MCF 10A (cell line): ENCODE measurements at regions of chr14 and their contacts with region 1.

Region 1: DNA sequence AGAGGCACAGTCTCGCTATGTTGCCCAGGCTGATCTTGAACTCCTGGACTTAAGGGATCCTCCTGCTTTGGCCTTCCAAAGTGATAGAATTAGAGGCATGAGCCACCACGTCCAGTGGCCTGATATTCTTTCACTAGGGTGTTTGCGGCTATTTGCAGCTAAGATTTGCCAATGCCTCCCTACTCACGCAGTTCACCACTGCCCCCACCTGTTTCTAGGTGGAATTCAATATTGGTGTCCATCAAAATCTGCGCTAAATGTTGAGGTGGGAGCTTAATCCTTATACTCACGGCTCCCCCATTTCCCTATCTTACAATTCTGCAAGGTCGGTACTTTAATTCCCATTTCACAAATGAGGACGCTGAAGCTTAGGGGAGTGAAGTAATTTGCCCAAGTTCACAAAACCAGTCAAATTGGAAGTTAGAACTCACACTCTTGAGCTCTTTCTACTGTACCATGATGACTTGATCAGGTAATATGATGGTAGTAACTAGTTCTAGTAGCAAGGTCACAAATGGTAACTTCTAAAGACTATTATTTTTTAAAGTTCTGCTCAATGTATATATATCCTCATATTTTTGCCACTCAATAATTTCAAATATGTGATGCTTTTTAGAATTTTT is 22.1 kb upstream of the LRRC9 start:
- DNase-seq: peak; percentile 73
- H3K4me3 Mint-ChIP-seq: no peak overlapping the region
- H3K27ac Mint-ChIP-seq: peak overlapping the region; percentile 54
- H3K4me1 Mint-ChIP-seq: peaks cover 14% of the 10 kb centered on the region
- H3K27me3 Mint-ChIP-seq: no peaks in the 10 kb centered on the region
- CTCF ChIP-seq: peak; percentile 84

Region 2: GRCh38 chr14:59507063-59507780 is 390.6 kb before region 1 on chr14:
- CTCF ChIA-PET with region 1: interaction called, 45 read pairs
- POLR2A ChIA-PET with region 1: no interaction called
- intact Hi-C with region 1: loop called (anchors 1 kb)
- DNase-seq: peak; percentile 72
- H3K4me3 Mint-ChIP-seq: no peak overlapping the region
- H3K27ac Mint-ChIP-seq: no peak overlapping the region
- H3K4me1 Mint-ChIP-seq: no peaks in the 10 kb centered on the region
- H3K27me3 Mint-ChIP-seq: no peaks in the 10 kb centered on the region
- CTCF ChIP-seq: peak; percentile 81

Region 3: DNA sequence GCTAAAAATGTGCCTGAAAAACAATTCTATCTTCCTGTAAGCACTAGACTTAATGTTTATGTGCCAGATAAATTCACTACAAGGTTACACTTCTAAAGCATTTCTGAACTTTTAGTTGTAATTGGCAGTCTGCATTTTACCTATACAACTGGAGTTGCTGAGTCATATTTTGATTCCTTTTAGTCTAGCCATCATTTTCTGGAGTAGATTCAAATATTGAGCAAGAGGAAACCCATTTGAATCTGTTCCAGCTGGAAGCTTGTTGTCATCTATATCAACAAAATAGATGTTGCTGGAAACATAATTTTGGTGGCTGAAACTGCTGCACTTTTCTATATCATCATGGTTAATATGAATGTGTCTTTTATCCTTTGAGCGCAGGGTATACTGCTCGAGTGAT is 199.1 kb before region 1 on chr14:
- CTCF ChIA-PET with region 1: interaction called, 152 read pairs
- POLR2A ChIA-PET with region 1: interaction called, 4 read pairs
- intact Hi-C with region 1: no loop called
- DNase-seq: peak; percentile 92
- H3K4me3 Mint-ChIP-seq: peak overlapping the region; percentile 53
- H3K27ac Mint-ChIP-seq: peak overlapping the region; percentile 98
- H3K4me1 Mint-ChIP-seq: peaks cover 48% of the 10 kb centered on the region
- H3K27me3 Mint-ChIP-seq: no peaks in the 10 kb centered on the region
- CTCF ChIP-seq: no peak

Region 4: GRCh38 chr14:59882957-59883356 is 14.9 kb before region 1 on chr14:
- CTCF ChIA-PET with region 1: interaction called, 10 read pairs
- POLR2A ChIA-PET with region 1: interaction called, 3 read pairs
- intact Hi-C with region 1: no loop called
- DNase-seq: peak; percentile 19
- H3K4me3 Mint-ChIP-seq: no peak overlapping the region
- H3K27ac Mint-ChIP-seq: no peak overlapping the region
- H3K4me1 Mint-ChIP-seq: no peaks in the 10 kb centered on the region
- H3K27me3 Mint-ChIP-seq: no peaks in the 10 kb centered on the region
- CTCF ChIP-seq: no peak

Region 5: GRCh38 chr14:59918824-59919569 is 21.1 kb after region 1 on chr14:
- CTCF ChIA-PET with region 1: interaction called, 22 read pairs
- POLR2A ChIA-PET with region 1: no interaction called
- intact Hi-C with region 1: no loop called
- DNase-seq: peak; percentile 34
- H3K4me3 Mint-ChIP-seq: no peak overlapping the region
- H3K27ac Mint-ChIP-seq: no peak overlapping the region
- H3K4me1 Mint-ChIP-seq: no peaks in the 10 kb centered on the region
- H3K27me3 Mint-ChIP-seq: no peaks in the 10 kb centered on the region
- CTCF ChIP-seq: peak; percentile 34

Region 6: DNA sequence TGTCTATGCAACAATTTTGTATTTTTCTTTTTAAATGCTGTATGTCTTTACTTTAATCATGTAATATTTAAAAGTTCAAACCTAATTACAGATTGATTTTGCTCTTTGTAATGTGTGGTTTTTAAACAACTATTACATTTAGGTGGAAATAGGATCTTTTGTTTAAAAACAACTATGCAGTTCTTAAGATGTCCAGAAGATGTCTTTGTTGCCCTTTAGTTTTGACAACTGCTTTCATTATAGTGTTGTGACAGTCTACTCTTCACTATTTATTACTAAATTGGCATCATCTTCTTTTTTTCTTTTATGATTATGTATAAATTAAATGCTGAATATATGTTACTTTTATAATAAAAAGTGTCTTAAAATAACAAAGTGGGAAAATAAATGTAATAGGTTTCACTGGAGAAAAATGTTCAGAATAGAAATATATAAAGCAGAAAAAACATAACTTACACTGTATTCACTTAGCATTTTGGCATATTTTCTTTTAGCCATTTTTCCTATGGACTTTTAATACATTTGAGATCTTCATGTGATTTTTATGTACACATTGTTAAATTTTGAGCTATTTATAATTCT is 166.7 kb after region 1 on chr14:
- CTCF ChIA-PET with region 1: no interaction called
- POLR2A ChIA-PET with region 1: no interaction called
- intact Hi-C with region 1: no loop called
- DNase-seq: peak; percentile 44
- H3K4me3 Mint-ChIP-seq: no peak overlapping the region
- H3K27ac Mint-ChIP-seq: no peak overlapping the region
- H3K4me1 Mint-ChIP-seq: peaks cover 8% of the 10 kb centered on the region
- H3K27me3 Mint-ChIP-seq: no peaks in the 10 kb centered on the region
- CTCF ChIP-seq: peak; percentile 53

Region 7: GRCh38 chr14:60164712-60165546 is 267.1 kb after region 1 on chr14 and contains the start of gene DHRS7:
- CTCF ChIA-PET with region 1: no interaction called
- POLR2A ChIA-PET with region 1: no interaction called
- intact Hi-C with region 1: no loop called
- DNase-seq: peak; percentile 79
- H3K4me3 Mint-ChIP-seq: peak within 1 kb of the TSS; percentile 89
- H3K27ac Mint-ChIP-seq: peak within 1 kb of the TSS; percentile 81
- H3K4me1 Mint-ChIP-seq: peaks cover 14% of the 10 kb centered on the region
- H3K27me3 Mint-ChIP-seq: no peaks in the 10 kb centered on the region
- CTCF ChIP-seq: peak; percentile 52
- total RNA-seq, gene DHRS7: 71.4 and 96.4 TPM in 2 replicates